T-cell (primary cell): ENCODE measurements at regions of chr12 and their contacts with region 1.

Region 1: GRCh38 chr12:54324617-54325441 is at the start of gene COPZ1:
- DNase-seq: peak; percentile 81 to 98 (median 95)
- ATAC-seq: peak; percentile 95 to 97 (median 96)
- H3K4me3 ChIP-seq: peak within 1 kb of the TSS; percentile 72 to 80
- H3K4me3 Mint-ChIP-seq: peak within 1 kb of the TSS; percentile 94 to 100 (median 95)
- H3K27ac ChIP-seq: peak within 1 kb of the TSS; percentile 60
- H3K27ac Mint-ChIP-seq: peak within 1 kb of the TSS; percentile 91 to 98
- H3K4me1 ChIP-seq: peaks cover 5 to 23% of the 10 kb centered on the region in 2 experiments
- H3K4me1 Mint-ChIP-seq: peaks cover 38 to 48% (median 39%) of the 10 kb centered on the region in 3 donors
- H3K27me3 ChIP-seq: no peaks in the 10 kb centered on the region
- H3K27me3 Mint-ChIP-seq: no peaks in the 10 kb centered on the region
- total RNA-seq, gene COPZ1: 60.4 to 81.3 (median 74.8) TPM

Region 2: GRCh38 chr12:54251667-54252284 is 73.1 kb before region 1 on chr12:
- CTCF ChIA-PET with region 1: interaction called, 18 to 26 read pairs
- POLR2A ChIA-PET with region 1: interaction called, 3 read pairs
- DNase-seq: peak in 7 of 35 experiments; percentile 4 to 70 (median 17)
- ATAC-seq: peak; percentile 55 to 70 (median 60)
- H3K4me3 ChIP-seq: no peak overlapping the region
- H3K4me3 Mint-ChIP-seq: no peak overlapping the region
- H3K27ac ChIP-seq: no peak overlapping the region
- H3K27ac Mint-ChIP-seq: no peak overlapping the region
- H3K4me1 ChIP-seq: peaks cover 0 to 5% of the 10 kb centered on the region in 2 experiments
- H3K4me1 Mint-ChIP-seq: peaks cover 5 to 10% (median 7%) of the 10 kb centered on the region in 3 donors
- H3K27me3 ChIP-seq: no peaks in the 10 kb centered on the region
- H3K27me3 Mint-ChIP-seq: no peaks in the 10 kb centered on the region

Region 3: GRCh38 chr12:54279866-54280467 is 44.9 kb before region 1 on chr12 and contains the start of gene CBX5:
- CTCF ChIA-PET with region 1: interaction called, 6 to 68 read pairs
- POLR2A ChIA-PET with region 1: interaction called, 18 to 39 read pairs
- DNase-seq: peak; percentile 98 to 100 (median 99)
- ATAC-seq: peak; percentile 55 to 59 (median 56)
- H3K4me3 ChIP-seq: peak within 1 kb of the TSS; percentile 78 to 87
- H3K4me3 Mint-ChIP-seq: no peak within 1 kb of the TSS
- H3K27ac ChIP-seq: peak within 1 kb of the TSS; percentile 98
- H3K27ac Mint-ChIP-seq: no peak within 1 kb of the TSS
- H3K4me1 ChIP-seq: peaks cover 35 to 48% of the 10 kb centered on the region in 2 experiments
- H3K4me1 Mint-ChIP-seq: peaks cover 19 to 51% (median 23%) of the 10 kb centered on the region in 3 donors
- H3K27me3 ChIP-seq: no peaks in the 10 kb centered on the region
- H3K27me3 Mint-ChIP-seq: no peaks in the 10 kb centered on the region
- total RNA-seq, gene CBX5: 43.8 to 54.5 (median 47.1) TPM

Region 4: GRCh38 chr12:54294152-54294952 is 30.5 kb before region 1 on chr12:
- CTCF ChIA-PET with region 1: interaction called, 4 to 20 read pairs
- POLR2A ChIA-PET with region 1: interaction called, 4 read pairs
- DNase-seq: peak in 28 of 35 experiments; percentile 10 to 66 (median 34)
- ATAC-seq: peak; percentile 39 to 75 (median 62)
- H3K4me3 ChIP-seq: no peak overlapping the region
- H3K4me3 Mint-ChIP-seq: no peak overlapping the region
- H3K27ac ChIP-seq: no peak overlapping the region
- H3K27ac Mint-ChIP-seq: no peak overlapping the region
- H3K4me1 ChIP-seq: peaks cover 0 to 5% of the 10 kb centered on the region in 2 experiments
- H3K4me1 Mint-ChIP-seq: peaks cover 5% of the 10 kb centered on the region in 3 donors
- H3K27me3 ChIP-seq: peaks cover 0 to 11% of the 10 kb centered on the region in 2 experiments
- H3K27me3 Mint-ChIP-seq: peaks cover 6% of the 10 kb centered on the region in 2 donors

Region 5: GRCh38 chr12:54306925-54307741 is 17.7 kb before region 1 on chr12:
- CTCF ChIA-PET with region 1: interaction called in 1 of 2 experiments, 10 read pairs
- POLR2A ChIA-PET with region 1: interaction called in 1 of 2 experiments, 3 read pairs
- DNase-seq: peak in 5 of 35 experiments; percentile 13 to 40 (median 16)
- ATAC-seq: peak in 3 of 4 experiments; percentile 32 to 47 (median 43)
- H3K4me3 ChIP-seq: no peak overlapping the region
- H3K4me3 Mint-ChIP-seq: no peak overlapping the region
- H3K27ac ChIP-seq: no peak overlapping the region
- H3K27ac Mint-ChIP-seq: peak overlapping the region in 1 of 2 donors; percentile 31
- H3K4me1 ChIP-seq: peaks cover 0 to 17% of the 10 kb centered on the region in 2 experiments
- H3K4me1 Mint-ChIP-seq: peaks cover 9 to 24% (median 16%) of the 10 kb centered on the region in 3 donors
- H3K27me3 ChIP-seq: peaks cover 0 to 18% of the 10 kb centered on the region in 2 experiments
- H3K27me3 Mint-ChIP-seq: peaks cover 14 to 17% of the 10 kb centered on the region in 2 donors

Region 6: GRCh38 chr12:54359033-54359761 is 34.4 kb after region 1 on chr12:
- CTCF ChIA-PET with region 1: interaction called, 3 to 55 read pairs
- POLR2A ChIA-PET with region 1: interaction called, 8 to 15 read pairs
- DNase-seq: peak; percentile 77 to 98 (median 94)
- ATAC-seq: peak; percentile 95 to 96 (median 95)
- H3K4me3 ChIP-seq: peak overlapping the region; percentile 83 to 84
- H3K4me3 Mint-ChIP-seq: no peak overlapping the region
- H3K27ac ChIP-seq: peak overlapping the region; percentile 77
- H3K27ac Mint-ChIP-seq: no peak overlapping the region
- H3K4me1 ChIP-seq: peaks cover 16 to 30% of the 10 kb centered on the region in 2 experiments
- H3K4me1 Mint-ChIP-seq: peaks cover 10 to 21% (median 14%) of the 10 kb centered on the region in 3 donors
- H3K27me3 ChIP-seq: peaks cover 0 to 3% of the 10 kb centered on the region in 2 experiments
- H3K27me3 Mint-ChIP-seq: no peaks in the 10 kb centered on the region

Region 7: DNA sequence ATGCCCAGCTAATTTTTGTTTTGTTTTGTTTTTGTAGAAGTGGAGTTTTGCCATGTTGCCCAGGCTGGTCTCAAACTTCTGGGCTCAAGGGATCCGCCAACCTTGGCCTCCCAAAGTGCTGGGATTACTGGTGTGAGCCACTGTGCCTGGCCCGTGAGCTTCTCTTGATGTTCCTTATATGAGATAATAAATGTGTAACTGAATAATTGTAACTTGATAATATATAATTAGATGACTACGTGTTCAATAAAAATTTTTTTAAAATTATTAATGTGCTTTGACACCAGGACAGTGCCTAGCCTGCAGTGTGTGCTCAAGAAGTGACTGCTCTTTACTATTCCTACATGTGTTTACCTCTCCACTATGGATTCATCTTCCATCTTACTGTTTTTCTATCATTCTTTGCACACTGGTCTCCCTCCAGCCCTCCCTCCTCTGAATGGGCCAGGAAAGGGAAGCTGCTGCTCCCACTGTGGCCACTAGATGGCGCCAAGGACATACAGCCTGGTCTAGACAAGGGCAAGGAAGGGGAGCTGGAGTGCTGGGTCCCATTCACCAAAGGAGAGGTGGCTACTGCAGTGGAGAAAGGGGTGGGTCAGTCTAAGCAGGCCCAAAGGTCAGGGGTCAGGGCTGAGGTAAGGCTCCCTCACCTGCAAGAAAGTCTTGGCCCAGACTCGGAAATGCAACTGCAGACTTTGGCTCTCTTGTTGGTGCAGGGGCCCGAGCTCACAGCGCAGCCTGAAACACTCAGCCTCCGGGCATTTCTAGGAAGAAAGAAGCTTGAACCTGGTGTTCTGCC is 74.4 kb after region 1 on chr12:
- CTCF ChIA-PET with region 1: interaction called in 1 of 2 experiments, 12 read pairs
- POLR2A ChIA-PET with region 1: no interaction called
- DNase-seq: peak; percentile 67 to 93 (median 85)
- ATAC-seq: peak; percentile 84 to 93 (median 89)
- H3K4me3 ChIP-seq: no peak overlapping the region
- H3K4me3 Mint-ChIP-seq: no peak overlapping the region
- H3K27ac ChIP-seq: no peak overlapping the region
- H3K27ac Mint-ChIP-seq: peak overlapping the region; percentile 35 to 70
- H3K4me1 ChIP-seq: peaks cover 0 to 13% of the 10 kb centered on the region in 2 experiments
- H3K4me1 Mint-ChIP-seq: peaks cover 10 to 16% (median 13%) of the 10 kb centered on the region in 3 donors
- H3K27me3 ChIP-seq: no peaks in the 10 kb centered on the region
- H3K27me3 Mint-ChIP-seq: no peaks in the 10 kb centered on the region

Region 8: GRCh38 chr12:54463034-54463433 is 138.2 kb after region 1 on chr12:
- CTCF ChIA-PET with region 1: no interaction called
- POLR2A ChIA-PET with region 1: no interaction called
- DNase-seq: no peak
- ATAC-seq: no peak
- H3K4me3 ChIP-seq: no peak overlapping the region
- H3K4me3 Mint-ChIP-seq: no peak overlapping the region
- H3K27ac ChIP-seq: no peak overlapping the region
- H3K27ac Mint-ChIP-seq: no peak overlapping the region
- H3K4me1 ChIP-seq: no peaks in the 10 kb centered on the region
- H3K4me1 Mint-ChIP-seq: no peaks in the 10 kb centered on the region
- H3K27me3 ChIP-seq: peaks cover 0 to 3% of the 10 kb centered on the region in 2 experiments
- H3K27me3 Mint-ChIP-seq: peaks cover 19 to 20% of the 10 kb centered on the region in 2 donors